ENCODE measurements at regions of chr17 and their contacts with region 1.

Region 1: GRCh38 chr17:74770498-74771318 is 5.4 kb downstream of the NAT9 start:
- DNase-seq: peak in 1 of 2 experiments; percentile 82
- H3K4me3 ChIP-seq: no peak overlapping the region
- H3K27ac ChIP-seq: no peak overlapping the region; the same call in 1 of the 2 replicates
- H3K4me1 ChIP-seq: peaks cover 0 to 2% (median under 1%) of the 10 kb centered on the region in 4 experiments; a peak in 3 of 7 replicates
- H3K27me3 ChIP-seq: no peaks in the 10 kb centered on the region
- CTCF ChIP-seq: peak; percentile 93 to 99 (median 96)
- EP300 ChIP-seq: no peak
- POLR2A ChIP-seq: no peak; a peak in 1 of 3 replicates
- RAD21 ChIP-seq: peak; percentile 96

Region 2: DNA sequence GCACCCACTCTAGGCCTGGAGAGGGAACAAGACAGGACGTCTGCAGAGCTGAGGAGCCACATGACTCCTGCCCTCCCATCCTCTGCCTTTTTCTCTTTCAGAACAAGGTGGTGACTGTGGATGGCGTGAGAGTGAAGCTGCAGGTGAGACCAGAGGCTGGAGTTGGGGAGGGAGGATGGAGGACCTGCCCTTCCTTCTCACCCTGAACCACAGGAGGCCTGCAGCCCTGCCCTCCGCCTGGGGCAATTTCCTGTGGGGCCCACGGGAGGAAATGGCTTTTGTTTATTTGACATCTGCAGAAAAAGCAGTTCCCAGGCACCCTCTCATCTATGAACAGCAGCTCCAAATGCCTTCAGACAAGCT is 28.6 kb before region 1 on chr17:
- CTCF ChIA-PET with region 1: interaction called, 388 read pairs
- POLR2A ChIA-PET with region 1: interaction called, 44 read pairs
- DNase-seq: no peak
- H3K4me3 ChIP-seq: no peak overlapping the region
- H3K27ac ChIP-seq: no peak overlapping the region
- H3K4me1 ChIP-seq: peaks cover 10 to 29% (median 19%) of the 10 kb centered on the region in 4 experiments
- H3K27me3 ChIP-seq: peaks cover 0 to 3% (median 0%) of the 10 kb centered on the region in 4 experiments; a peak in 2 of 7 replicates
- CTCF ChIP-seq: no peak
- EP300 ChIP-seq: no peak
- POLR2A ChIP-seq: no peak
- RAD21 ChIP-seq: no peak

Region 3: DNA sequence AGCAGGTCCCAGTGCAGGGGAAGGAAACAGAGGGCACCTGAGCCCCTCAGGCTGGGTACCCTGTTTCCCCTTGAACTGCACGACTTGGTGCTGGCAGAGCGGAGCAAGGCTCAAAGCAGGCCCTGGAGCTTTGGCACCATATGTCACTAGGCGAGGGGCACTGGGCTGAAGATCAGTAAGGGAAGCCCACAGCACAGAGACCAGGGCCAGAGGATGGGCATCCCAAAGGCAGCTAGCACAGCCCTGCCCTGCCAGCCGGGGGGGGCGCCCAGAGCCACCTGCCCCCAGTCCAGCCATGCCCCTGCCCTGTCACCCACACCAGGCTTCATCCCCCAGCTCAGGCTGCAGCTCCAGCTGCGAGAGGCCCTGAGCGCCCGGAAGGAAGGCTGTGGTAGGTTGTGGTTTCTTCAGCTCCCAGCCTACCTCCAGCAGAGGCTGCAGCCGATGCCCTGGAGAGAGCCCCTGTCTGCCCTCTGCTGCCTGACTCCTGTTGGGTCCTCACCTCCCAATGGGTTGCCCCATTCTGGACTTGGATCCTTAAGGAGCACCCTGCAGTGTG is 11.4 kb before region 1 on chr17:
- CTCF ChIA-PET with region 1: interaction called, 231 read pairs
- POLR2A ChIA-PET with region 1: interaction called, 15 read pairs
- DNase-seq: no peak
- H3K4me3 ChIP-seq: peak overlapping the region in 1 of 4 experiments; percentile 36; a peak in 2 of 8 replicates
- H3K27ac ChIP-seq: peak overlapping the region; percentile 70; the same call in 1 of the 2 replicates
- H3K4me1 ChIP-seq: peaks cover 10 to 67% (median 51%) of the 10 kb centered on the region in 4 experiments
- H3K27me3 ChIP-seq: no peaks in the 10 kb centered on the region
- CTCF ChIP-seq: no peak
- EP300 ChIP-seq: no peak
- POLR2A ChIP-seq: no peak
- RAD21 ChIP-seq: no peak

Region 4: GRCh38 chr17:74786431-74787055 is 15.8 kb after region 1 on chr17:
- CTCF ChIA-PET with region 1: interaction called, 23 read pairs
- POLR2A ChIA-PET with region 1: interaction called, 4 read pairs
- DNase-seq: no peak
- H3K4me3 ChIP-seq: no peak overlapping the region
- H3K27ac ChIP-seq: no peak overlapping the region
- H3K4me1 ChIP-seq: peaks cover 0 to 3% (median 3%) of the 10 kb centered on the region in 4 experiments; a peak in 5 of 7 replicates
- H3K27me3 ChIP-seq: no peaks in the 10 kb centered on the region
- CTCF ChIP-seq: no peak
- EP300 ChIP-seq: no peak
- POLR2A ChIP-seq: no peak
- RAD21 ChIP-seq: no peak

Measured in H1 (cell line).